Posterior cingulate gyrus (tissue), 11 donors: ENCODE measurements at regions of chr18 and their contacts with region 1.

Region 1: DNA sequence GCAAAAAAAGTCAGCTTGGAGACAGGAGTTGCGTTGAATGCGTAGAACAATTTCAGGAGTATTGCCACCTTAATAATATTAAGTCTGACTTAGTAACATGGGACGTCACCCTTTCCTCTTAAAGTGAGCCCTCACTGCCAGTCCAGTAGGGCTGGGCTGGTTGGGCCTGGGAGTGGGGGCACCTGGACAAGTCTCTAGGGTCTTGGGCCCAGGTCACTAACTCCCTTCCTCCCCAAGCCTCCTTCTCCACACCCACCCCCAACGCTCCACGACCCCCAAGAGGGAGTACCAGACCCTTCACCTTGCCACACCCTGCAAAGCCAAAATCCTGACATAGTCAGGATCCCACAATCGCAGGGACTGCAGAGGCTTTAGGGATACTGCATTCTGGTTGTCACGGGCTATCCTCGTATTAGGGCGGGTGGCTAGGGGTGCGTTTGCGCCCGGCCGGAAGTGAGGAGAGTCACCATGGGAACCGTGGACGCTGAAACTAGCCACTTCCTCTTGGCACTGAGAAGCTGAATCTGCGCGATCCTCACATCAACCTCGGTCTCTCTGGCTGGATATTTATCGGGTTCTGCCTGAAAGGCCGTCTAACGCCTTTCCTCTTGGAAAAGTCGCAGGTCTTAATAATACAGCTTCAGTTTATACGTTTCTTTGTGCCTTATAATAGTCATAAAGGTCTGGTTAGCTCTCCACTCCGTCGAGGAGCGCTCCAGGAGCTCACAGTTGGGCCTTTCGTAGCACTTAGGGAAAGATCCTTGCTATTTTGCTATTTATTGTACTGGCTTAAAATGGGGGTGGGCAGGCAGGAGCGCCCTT is 10.3 kb upstream of the CXXC1 start:
- DNase-seq: peak in 9 of 10 donors; percentile 60 to 95 (median 73)

Region 2: GRCh38 chr18:50138181-50139064 is 159.4 kb before region 1 on chr18:
- intact Hi-C with region 1: no loop called
- DNase-seq: no peak

Region 3: GRCh38 chr18:50356036-50356945 is 58.5 kb after region 1 on chr18:
- intact Hi-C with region 1: loop called (anchors 5 kb)
- DNase-seq: no peak